OCI-LY7 (cell line): ENCODE measurements at regions of chr1 and their contacts with region 1.

Region 1: DNA sequence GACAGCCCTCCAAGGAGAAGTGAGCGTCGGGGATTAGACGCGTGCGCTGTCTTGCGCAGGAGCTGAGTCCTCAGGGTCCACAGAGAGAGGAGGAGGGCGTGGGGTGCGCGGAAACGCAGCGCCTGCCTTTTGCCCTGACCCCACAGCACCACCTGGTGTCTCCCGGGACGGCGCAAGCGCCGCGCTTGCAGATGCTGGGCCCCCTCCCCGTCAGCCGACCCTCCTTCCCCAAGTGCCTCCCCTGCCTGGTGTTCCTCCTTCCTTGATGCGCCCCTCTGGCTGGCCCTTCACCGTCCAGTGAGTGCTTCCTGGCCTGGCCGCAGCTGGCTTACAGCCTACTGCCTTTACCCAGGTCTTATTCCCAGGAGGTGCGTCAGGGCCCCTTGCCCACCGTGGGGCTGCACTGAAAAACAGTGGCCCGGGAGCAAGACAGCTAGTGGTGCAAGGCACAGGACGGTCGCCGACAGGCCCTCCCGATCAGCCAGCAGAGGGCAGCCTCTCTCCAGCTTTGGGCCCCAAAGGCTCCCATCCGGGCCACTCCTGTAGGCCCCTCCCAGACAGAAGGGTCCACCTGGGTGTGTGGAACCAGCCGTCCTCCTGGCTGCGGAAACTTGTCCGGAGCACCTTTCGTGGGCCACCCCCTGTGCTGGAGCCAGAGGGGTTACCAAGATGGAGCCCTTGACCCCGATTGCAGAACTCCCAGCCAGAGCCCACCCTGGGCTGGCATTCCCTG is 12.9 kb upstream of the PHLDA3 start:
- DNase-seq: peak; percentile 88
- H3K4me3 ChIP-seq: peak overlapping the region; percentile 55
- H3K27ac ChIP-seq: no peak overlapping the region
- H3K4me1 ChIP-seq: peaks cover 28% of the 10 kb centered on the region
- CTCF ChIP-seq: peak; percentile 96

Region 2: DNA sequence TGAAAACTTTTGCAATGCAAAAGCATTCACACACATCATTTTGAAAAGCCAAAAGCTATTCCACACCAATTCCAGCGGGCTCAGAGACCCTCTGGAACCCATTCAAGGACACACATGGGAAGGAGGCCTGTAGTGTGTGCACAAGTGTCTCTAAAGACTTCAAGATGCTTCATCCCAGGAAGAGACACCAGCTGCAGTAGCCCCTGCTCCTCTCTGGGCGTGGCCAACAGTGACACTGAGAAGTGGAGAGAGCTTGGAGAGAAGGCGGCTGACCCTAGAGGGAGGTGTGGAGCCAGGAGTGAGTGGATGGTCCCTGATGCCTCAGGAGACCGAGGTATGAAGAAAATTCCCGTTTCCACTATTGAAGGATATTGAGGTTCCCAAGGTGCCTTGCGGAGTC is 45.5 kb before region 1 on chr1:
- CTCF ChIA-PET with region 1: interaction called, 7 read pairs
- POLR2A ChIA-PET with region 1: interaction called, 3 read pairs
- intact Hi-C with region 1: loop called (anchors 1 kb)
- DNase-seq: no peak
- H3K4me3 ChIP-seq: no peak overlapping the region
- H3K27ac ChIP-seq: no peak overlapping the region
- H3K4me1 ChIP-seq: peaks cover 34% of the 10 kb centered on the region
- CTCF ChIP-seq: no peak

Region 3: DNA sequence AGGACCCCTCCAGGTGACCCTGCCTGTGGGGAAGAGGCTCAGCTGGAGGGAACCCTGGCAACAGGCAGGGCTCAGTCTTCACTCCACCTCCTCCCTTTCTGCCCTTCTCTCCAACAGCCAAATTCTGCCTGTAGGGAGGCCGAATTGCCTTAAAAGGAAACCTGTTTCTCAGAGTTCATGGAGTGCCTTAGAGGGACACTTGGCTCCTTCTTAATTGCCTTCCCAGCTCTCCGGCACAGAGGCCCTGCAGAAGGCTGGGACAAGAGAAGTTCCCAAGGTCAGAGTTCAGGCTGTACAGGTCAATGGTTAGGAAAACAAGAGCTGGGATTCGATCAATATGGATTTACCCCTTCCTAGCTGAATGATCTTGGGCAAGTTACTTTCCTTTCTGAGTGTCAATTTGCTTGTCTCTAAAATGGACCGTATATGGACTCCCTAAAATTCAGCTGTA is 18.8 kb after region 1 on chr1:
- CTCF ChIA-PET with region 1: interaction called, 5 read pairs
- POLR2A ChIA-PET with region 1: interaction called, 16 read pairs
- intact Hi-C with region 1: no loop called
- DNase-seq: no peak
- H3K4me3 ChIP-seq: no peak overlapping the region
- H3K27ac ChIP-seq: no peak overlapping the region
- H3K4me1 ChIP-seq: peaks cover 38% of the 10 kb centered on the region
- CTCF ChIP-seq: no peak

Region 4: DNA sequence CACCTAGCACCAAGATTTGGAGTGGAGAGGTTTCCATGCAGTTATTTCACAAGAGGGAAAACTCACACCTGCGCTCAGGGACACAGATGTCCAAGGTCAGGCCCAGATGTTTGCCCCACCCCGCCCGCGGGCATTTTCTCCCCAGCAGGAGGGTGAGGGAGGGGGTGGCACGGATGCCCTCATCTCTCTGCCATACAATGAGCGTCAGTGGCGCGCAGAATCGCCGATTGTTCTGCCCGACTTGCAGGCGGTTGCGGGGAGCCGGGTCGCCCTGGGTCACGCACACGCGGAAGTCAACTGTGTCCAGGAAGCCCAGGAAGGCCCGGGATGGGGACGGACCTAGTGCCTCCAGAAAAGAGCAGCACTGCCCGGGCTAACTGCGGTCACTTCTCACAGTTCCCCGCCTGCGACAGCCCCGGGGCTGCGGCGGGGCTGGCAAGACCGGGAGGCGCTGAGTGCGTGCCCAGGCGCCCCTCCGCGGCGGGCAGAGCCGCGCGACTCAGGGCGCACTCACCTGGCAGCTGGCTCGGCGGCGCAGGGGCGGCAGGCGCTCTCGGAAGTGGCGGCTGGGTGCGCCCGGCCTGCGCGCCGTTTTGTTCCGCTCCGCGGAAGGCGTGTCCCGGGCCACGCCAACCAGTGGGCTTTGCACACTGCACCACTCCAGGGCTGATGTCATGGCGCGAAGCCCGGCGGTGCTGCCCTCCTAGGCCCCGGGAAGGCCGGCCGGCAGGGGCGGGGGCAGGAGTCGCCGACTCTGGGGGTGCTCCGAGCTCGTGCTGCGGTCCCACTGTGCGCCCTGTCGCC is 24.8 kb after region 1 on chr1 and contains the start of gene CSRP1:
- CTCF ChIA-PET with region 1: interaction called, 82 read pairs
- POLR2A ChIA-PET with region 1: interaction called, 39 read pairs
- intact Hi-C with region 1: no loop called
- DNase-seq: peak; percentile 87
- H3K4me3 ChIP-seq: peak within 1 kb of the TSS; percentile 80
- H3K27ac ChIP-seq: peak within 1 kb of the TSS; percentile 59
- H3K4me1 ChIP-seq: peaks cover 95% of the 10 kb centered on the region
- CTCF ChIP-seq: peak; percentile 40; the same call in 1 of the 2 replicates
- total RNA-seq, gene CSRP1: 46.4 and 52.8 TPM in 2 replicates

Region 5: DNA sequence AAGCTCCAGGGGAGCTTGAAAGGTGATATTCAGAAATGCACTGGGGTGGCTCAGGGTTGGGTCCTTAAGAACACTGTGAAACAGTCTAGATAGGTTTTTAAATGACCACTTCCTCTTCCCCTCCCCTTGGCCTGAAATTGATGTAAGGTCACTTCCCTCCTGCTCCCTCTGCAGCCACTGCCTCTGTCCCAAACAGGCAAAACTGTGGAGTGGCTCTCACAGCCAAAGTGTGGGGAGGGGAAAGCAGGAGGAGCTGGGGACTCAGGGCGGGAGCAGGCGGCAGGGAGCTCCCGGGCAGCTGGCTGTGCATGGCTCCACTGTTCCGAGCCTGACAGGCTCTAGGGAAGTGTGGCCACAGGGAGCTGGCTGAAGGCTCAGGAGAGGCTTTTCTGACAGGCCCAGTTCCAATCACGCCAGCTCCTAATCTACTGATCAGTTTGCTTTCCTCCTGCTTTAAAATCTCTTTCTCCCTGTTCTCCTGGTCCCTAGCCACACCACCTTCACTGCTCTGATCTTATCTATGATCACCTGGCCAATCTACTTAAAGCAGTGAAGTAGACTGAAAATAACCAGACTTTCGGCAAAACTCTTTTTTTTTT is 30.1 kb after region 1 on chr1:
- CTCF ChIA-PET with region 1: interaction called, 82 read pairs
- POLR2A ChIA-PET with region 1: interaction called, 39 read pairs
- intact Hi-C with region 1: loop called (anchors 1 kb)
- DNase-seq: peak; percentile 62
- H3K4me3 ChIP-seq: peak overlapping the region; percentile 46
- H3K27ac ChIP-seq: peak overlapping the region; percentile 58
- H3K4me1 ChIP-seq: peaks cover 59% of the 10 kb centered on the region
- CTCF ChIP-seq: no peak

Region 6: DNA sequence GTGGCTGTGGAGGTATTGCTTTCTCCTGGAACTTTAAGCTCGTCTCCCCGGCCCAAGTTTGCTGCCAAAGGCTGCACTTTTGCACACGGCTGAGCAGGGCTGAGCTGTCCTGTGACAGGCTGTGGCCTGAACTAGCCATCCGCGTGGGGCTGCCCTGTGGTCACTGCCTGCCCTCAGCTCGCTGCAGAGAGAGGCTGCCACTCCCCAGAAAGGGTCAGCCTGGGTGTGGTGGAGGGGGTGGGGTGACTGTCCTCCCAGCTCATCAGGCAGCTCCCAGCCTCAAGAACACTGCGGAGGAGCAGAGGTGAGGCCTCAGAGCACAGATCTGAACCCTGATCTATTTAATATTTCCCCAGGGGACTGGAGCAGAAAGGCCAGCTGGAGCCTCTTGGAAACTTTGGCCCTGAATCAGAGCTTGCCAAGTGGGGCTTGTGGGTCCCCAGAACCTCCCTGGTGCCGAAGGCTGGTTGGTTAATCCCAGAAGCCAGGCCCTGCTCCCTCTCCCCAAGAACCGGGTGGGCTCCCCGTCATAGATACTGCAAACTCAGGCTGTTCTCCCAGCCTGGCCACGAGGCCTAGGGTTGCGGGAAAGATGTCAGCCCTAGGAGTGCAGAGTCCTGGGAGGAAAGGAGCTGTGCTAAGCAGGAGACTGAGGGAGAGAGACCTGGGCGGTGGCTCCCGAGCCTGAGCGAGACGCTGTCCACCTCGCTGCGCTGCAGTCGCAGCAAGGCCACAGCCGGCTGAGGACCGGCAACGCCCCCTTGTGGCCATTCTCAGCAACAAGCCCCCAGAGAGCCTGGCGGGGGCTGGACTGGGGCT is 221.9 kb after region 1 on chr1:
- CTCF ChIA-PET with region 1: no interaction called
- POLR2A ChIA-PET with region 1: no interaction called
- intact Hi-C with region 1: loop called (anchors 1 kb)
- DNase-seq: peak; percentile 73
- H3K4me3 ChIP-seq: no peak overlapping the region
- H3K27ac ChIP-seq: no peak overlapping the region
- H3K4me1 ChIP-seq: peaks cover 4% of the 10 kb centered on the region
- CTCF ChIP-seq: peak; percentile 87